CD4-positive, alpha-beta T cell (primary cell): ENCODE measurements at regions of chr9 and their contacts with region 1.

Region 1: DNA sequence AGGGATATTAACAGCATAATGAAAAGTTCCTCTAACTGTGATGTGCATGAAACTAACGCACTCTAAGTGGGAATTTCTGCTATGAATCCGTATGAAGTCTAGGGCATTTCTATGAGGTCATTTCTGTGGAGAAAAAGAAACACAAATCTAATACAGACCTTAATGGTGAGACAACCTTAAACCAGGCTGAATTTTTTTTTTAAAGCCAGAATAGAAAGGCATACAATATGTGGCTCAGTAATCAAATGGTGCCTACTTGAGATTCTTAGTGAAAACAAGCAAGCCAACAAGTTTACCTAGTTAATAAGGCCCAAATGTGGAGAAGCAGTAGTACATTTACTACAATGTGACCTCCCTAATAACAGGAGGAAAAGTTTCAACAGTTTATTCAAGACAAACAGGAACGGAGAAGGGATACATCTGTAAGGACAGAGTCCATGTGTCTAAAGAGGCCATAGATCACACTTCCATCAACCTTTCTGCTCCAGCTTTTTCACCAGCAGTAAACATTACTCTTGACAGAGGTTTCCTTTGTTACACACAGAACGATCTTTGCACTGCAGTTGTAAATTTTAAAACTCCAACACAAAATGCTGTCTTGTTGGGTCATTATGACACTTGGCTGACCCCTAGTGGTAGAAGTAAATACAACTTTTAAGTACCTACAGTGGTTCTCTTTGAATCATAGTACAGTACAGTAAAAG is 26.2 kb downstream of the CARNMT1 start:
- DNase-seq: peak in 4 of 14 experiments; percentile 11 to 87 (median 82)
- ATAC-seq: peak; percentile 96
- H3K4me3 ChIP-seq: no peak overlapping the region
- H3K4me3 Mint-ChIP-seq: no peak overlapping the region
- H3K27ac ChIP-seq: no peak overlapping the region
- H3K27ac Mint-ChIP-seq: no peak overlapping the region
- H3K4me1 ChIP-seq: no peaks in the 10 kb centered on the region
- H3K4me1 Mint-ChIP-seq: peaks cover 5% of the 10 kb centered on the region
- H3K27me3 ChIP-seq: no peaks in the 10 kb centered on the region
- H3K27me3 Mint-ChIP-seq: no peaks in the 10 kb centered on the region
- CTCF ChIP-seq: peak; percentile 92

Region 2: GRCh38 chr9:75071530-75072124 is 69.8 kb after region 1 on chr9:
- CTCF ChIA-PET with region 1: no interaction called
- POLR2A ChIA-PET with region 1: no interaction called
- intact Hi-C with region 1: loop called in 1 of 2 experiments (anchors 5 kb)
- DNase-seq: peak; percentile 23 to 81 (median 68)
- ATAC-seq: peak; percentile 99
- H3K4me3 ChIP-seq: no peak overlapping the region
- H3K4me3 Mint-ChIP-seq: no peak overlapping the region
- H3K27ac ChIP-seq: peak overlapping the region in 1 of 2 donors; percentile 2
- H3K27ac Mint-ChIP-seq: peak overlapping the region; percentile 72
- H3K4me1 ChIP-seq: peaks cover 9% of the 10 kb centered on the region
- H3K4me1 Mint-ChIP-seq: peaks cover 31% of the 10 kb centered on the region
- H3K27me3 ChIP-seq: no peaks in the 10 kb centered on the region
- H3K27me3 Mint-ChIP-seq: no peaks in the 10 kb centered on the region
- CTCF ChIP-seq: no peak

Region 3: DNA sequence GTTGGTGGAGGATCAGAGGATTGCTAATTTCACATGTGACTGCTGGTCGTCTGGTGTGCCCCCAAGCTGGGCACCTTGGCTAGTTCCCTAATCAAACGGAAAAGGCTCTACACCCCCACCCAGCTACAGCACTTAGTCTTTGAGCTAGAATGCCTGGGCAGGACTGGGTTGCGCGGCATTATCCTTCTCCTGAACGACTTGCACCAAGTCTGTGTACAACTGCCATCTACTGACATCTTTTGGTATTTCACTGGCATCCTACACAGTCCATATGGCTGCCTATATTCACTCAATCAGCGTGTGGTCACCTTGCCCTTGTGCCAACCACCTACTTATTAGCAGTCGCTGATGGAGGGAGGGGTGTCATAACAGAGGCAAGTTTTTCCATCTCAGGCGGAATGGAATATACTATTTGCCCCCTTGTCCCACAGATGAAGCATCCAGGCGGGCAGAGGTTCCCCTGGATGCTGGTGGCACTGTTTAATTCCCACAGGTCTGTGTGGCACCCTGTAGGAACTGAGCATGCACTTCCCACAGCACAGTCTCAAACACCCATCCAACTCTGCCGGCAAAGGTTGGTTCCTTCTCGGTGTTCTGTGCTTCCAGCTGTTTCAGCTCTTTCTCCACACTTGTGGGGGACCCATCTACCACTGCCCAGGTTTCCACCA is 236.6 kb after region 1 on chr9:
- CTCF ChIA-PET with region 1: no interaction called
- POLR2A ChIA-PET with region 1: no interaction called
- intact Hi-C with region 1: loop called in 1 of 2 experiments (anchors 5 kb)
- DNase-seq: peak in 12 of 14 experiments; percentile 6 to 71 (median 32)
- ATAC-seq: peak; percentile 96
- H3K4me3 ChIP-seq: no peak overlapping the region
- H3K4me3 Mint-ChIP-seq: no peak overlapping the region
- H3K27ac ChIP-seq: no peak overlapping the region
- H3K27ac Mint-ChIP-seq: no peak overlapping the region
- H3K4me1 ChIP-seq: peaks cover 3% of the 10 kb centered on the region
- H3K4me1 Mint-ChIP-seq: no peaks in the 10 kb centered on the region
- H3K27me3 ChIP-seq: no peaks in the 10 kb centered on the region
- H3K27me3 Mint-ChIP-seq: no peaks in the 10 kb centered on the region
- CTCF ChIP-seq: peak; percentile 73

Region 4: DNA sequence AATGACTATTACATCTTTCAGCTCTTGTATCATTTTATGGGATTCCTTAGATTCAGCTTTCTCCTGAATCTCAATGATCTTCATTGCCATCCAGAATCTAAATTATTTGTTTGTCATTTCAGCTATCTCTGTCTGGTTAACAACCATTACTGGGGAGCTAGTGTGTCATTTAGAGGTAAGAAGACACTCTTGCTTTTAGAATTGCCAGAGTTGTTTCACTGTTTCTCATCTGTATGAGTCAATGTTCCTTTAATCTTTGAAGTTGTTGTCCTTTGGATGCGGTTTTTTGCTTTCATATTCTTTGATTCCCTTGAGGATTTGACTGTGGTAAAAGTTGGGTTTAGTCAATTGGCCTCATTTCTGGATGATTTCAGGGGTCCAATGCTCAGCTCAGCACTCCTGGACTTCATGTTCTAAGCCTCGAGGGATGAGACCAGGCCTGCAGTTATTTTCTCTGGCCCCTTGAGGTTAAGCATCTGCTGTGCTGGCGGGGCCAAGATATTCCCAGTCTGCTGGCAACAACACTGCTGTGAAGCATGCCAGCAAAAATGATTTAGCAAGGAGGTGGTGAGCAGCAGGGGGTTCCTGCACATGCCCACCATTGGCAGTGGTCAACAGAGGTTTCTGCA is 786.2 kb after region 1 on chr9:
- CTCF ChIA-PET with region 1: no interaction called
- POLR2A ChIA-PET with region 1: no interaction called
- intact Hi-C with region 1: no loop called
- DNase-seq: no peak
- ATAC-seq: no peak
- H3K4me3 ChIP-seq: no peak overlapping the region
- H3K4me3 Mint-ChIP-seq: no peak overlapping the region
- H3K27ac ChIP-seq: no peak overlapping the region
- H3K27ac Mint-ChIP-seq: no peak overlapping the region
- H3K4me1 ChIP-seq: no peaks in the 10 kb centered on the region
- H3K4me1 Mint-ChIP-seq: no peaks in the 10 kb centered on the region
- H3K27me3 ChIP-seq: no peaks in the 10 kb centered on the region
- H3K27me3 Mint-ChIP-seq: no peaks in the 10 kb centered on the region
- CTCF ChIP-seq: no peak

Region 5: GRCh38 chr9:76101491-76101890 is 1099.6 kb after region 1 on chr9:
- CTCF ChIA-PET with region 1: no interaction called
- POLR2A ChIA-PET with region 1: no interaction called
- intact Hi-C with region 1: no loop called
- DNase-seq: no peak
- ATAC-seq: no peak
- H3K4me3 ChIP-seq: no peak overlapping the region
- H3K4me3 Mint-ChIP-seq: no peak overlapping the region
- H3K27ac ChIP-seq: no peak overlapping the region
- H3K27ac Mint-ChIP-seq: no peak overlapping the region
- H3K4me1 ChIP-seq: no peaks in the 10 kb centered on the region
- H3K4me1 Mint-ChIP-seq: peaks cover 34% of the 10 kb centered on the region
- H3K27me3 ChIP-seq: no peaks in the 10 kb centered on the region
- H3K27me3 Mint-ChIP-seq: no peaks in the 10 kb centered on the region
- CTCF ChIP-seq: no peak